ENCODE measurements at regions of chr12 and their contacts with region 1.

Region 1: DNA sequence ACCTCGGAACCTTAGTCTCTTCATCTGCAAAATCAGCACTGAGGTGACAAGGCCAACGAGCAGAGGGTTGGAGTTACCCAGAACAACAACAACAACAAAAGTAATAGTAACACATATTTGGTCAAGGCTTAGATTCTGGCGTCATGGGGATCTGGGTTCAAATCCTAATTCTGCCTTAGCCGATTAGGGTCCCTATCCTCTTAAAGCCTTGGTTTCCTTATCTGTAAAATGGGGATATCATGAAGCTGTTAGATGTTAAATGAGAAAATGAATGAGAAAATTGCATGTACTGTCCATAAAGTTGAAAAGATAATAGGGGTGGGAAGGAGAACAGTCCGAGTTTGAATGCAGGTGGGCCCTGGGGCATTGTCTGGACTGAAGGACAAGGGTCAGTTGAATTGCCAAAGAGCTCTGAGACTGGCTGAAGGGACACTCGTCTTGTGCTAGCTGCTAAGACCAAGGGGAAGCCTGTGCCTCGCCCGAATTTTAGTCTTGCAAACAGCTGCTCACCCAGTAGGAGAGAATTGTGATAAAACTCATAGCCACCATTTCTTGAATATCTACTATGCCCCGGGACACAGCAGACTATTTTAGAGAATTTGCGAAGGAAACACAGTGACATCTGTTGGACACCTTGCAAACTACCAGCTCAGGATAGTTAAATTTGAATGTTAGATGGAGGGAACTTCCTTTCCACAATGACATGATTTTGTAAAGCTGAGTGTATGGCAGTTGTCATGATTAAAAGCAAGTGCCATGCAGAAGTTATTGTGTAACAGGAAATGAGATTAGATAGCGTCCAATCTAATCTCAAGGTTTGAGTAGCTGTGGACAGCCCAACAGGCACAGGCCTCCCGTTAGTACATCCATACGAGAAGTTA is 6.8 kb upstream of the HNF1A start:
- DNase-seq: no peak
- ATAC-seq: peak; percentile 84 to 88

Region 2: DNA sequence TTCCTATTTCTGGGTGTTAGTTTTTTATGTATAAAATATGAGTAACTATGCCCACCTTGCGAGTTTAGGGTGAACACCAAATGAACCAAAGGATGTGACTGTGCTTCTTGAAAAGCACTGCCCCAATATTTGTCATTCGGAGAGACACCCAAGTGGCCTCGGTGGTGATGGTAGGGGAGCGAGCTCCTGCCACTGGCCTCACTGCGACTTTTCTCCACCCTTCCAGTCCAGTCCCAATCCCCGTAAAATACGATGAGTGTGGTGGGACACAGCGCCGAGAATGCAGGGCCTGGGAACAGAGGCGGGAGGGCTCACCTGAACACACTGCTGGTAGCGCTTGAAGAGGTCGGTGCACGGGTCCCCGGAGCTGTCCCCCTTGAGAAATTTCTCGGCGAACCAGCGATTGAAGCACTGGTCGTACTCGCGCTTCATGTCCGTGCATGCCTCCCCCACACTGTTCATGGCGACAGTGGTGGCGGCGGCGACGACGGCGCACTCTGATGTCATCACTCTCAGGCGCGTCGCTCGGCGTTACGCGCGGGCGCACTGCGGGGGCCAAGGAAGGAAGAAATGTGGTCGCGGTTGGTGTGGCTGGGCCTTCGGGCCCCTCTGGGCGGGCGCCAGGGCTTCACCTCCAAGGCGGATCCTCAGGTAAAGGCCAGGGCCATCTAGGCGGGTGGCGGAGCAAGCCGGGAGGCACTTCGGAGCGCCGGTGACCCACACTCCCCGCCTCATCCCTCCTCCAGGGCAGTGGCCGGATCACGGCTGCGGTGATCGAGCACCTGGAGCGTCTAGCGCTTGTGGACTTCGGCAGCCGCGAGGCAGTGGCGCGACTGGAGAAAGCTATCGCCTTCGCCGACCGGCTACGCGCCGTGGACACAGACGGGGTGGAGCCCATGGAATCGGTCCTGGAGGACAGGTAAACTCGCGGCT is 525.4 kb before region 1 on chr12 and contains the starts of genes GATC and TRIAP1:
- intact Hi-C with region 1: no loop called
- DNase-seq: peak; percentile 83
- ATAC-seq: peak; percentile 98 to 99
- total RNA-seq, gene GATC: 14.8 to 19.1 TPM
- total RNA-seq, gene TRIAP1: 13.6 to 15.3 TPM

Region 3: DNA sequence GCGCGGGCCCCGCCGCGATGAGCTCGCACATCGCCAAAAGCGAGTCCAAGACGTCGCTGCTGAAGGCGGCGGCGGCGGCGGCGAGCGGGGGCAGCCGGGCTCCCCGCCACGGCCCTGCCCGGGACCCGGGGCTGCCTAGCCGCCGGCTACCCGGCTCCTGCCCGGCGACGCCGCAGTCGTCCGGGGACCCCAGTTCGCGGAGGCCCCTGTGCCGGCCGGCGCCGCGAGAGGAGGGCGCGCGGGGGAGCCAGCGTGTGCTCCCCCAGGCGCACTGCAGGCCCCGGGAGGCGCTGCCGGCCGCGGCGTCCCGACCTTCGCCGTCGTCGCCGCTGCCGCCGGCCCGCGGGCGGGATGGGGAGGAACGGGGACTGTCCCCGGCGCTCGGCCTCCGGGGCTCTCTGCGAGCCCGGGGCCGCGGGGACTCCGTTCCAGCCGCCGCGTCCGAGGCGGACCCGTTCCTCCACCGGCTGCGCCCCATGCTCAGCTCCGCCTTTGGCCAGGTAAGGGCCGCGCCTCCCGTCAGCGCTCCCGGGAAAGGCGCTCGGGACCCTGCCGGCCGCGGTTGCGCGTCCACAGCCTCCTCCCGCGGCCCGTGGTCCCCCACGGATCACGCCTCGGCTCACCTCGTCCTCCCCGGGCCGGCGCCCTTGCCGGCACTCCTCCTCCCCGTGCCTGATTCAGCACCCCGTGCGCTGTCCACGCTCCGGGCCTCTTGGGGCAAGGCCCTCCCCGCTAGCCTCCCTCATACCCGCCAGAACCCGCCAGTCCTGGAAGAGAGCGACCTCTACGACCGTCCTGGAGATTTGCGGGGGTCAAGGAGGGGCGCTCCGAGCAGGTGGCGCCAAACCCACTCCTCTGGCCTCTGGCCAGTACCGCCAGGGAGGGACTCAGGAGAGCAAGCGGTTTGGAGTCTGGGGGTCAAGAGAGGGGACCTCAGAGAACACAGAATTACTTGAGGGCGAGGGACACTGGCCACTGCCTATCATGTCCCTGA is 330.4 kb before region 1 on chr12:
- intact Hi-C with region 1: loop called (anchors 5 to 10 kb)
- DNase-seq: peak; percentile 71
- ATAC-seq: peak; percentile 93 to 95

Measured in left cardiac atrium (tissue), 4 donors.